Mammary epithelial cell (primary cell): ENCODE measurements at regions of chr1 and their contacts with region 1.

Region 1: DNA sequence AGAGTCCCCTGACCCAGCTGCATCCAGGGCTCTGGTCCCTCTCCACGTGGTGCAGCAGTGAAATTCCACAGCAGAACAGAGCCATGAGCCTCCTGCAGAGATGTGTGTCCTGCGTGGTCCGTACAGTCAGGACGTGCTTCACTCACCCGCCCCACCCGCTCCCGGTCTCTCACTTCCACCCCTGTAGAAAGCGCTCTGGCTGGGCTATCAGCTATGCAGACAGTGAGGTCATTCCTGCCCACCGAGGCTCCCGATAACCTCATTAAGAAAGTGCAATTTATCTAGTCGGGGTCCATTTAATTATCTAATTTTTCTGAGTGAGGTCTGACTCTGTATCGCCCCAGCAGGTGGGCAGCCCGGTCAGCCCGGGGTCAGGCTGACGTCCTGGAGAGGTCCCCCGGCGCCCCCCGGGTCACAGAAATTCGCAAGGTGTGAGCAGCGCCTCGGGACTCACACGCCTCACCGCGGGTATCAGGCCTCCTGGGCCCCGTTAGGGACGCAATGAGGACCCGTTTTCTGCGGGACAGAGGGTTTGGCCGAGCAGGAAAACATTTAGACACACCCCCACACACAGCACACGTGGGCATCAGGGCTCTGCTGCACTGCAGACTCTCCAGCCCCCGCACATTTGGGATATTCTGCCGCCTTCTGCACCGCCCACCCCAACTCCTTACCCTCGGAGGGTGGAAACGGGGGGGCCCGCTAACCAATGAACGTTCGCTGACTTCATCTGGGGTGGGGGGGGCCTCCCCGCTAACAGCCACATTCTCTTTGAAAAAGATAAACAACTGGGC is 76.7 kb downstream of the PRDM16 start:
- DNase-seq: no peak
- H3K4me3 ChIP-seq: no peak overlapping the region
- H3K27ac ChIP-seq: no peak overlapping the region
- H3K4me1 ChIP-seq: no peaks in the 10 kb centered on the region
- H3K27me3 ChIP-seq: no peaks in the 10 kb centered on the region
- CTCF ChIP-seq: no peak

Region 2: GRCh38 chr1:2927393-2928360 is 218.1 kb before region 1 on chr1:
- CTCF ChIA-PET with region 1: no interaction called
- dilution Hi-C with region 1: loop called (anchors 5 kb)
- in situ Hi-C with region 1: no loop called
- intact Hi-C with region 1: no loop called
- DNase-seq: no peak
- H3K4me3 ChIP-seq: no peak overlapping the region
- H3K27ac ChIP-seq: no peak overlapping the region
- H3K4me1 ChIP-seq: no peaks in the 10 kb centered on the region
- H3K27me3 ChIP-seq: no peaks in the 10 kb centered on the region
- CTCF ChIP-seq: no peak